ENCODE measurements at regions of chr22 and their contacts with region 1.

Region 1: DNA sequence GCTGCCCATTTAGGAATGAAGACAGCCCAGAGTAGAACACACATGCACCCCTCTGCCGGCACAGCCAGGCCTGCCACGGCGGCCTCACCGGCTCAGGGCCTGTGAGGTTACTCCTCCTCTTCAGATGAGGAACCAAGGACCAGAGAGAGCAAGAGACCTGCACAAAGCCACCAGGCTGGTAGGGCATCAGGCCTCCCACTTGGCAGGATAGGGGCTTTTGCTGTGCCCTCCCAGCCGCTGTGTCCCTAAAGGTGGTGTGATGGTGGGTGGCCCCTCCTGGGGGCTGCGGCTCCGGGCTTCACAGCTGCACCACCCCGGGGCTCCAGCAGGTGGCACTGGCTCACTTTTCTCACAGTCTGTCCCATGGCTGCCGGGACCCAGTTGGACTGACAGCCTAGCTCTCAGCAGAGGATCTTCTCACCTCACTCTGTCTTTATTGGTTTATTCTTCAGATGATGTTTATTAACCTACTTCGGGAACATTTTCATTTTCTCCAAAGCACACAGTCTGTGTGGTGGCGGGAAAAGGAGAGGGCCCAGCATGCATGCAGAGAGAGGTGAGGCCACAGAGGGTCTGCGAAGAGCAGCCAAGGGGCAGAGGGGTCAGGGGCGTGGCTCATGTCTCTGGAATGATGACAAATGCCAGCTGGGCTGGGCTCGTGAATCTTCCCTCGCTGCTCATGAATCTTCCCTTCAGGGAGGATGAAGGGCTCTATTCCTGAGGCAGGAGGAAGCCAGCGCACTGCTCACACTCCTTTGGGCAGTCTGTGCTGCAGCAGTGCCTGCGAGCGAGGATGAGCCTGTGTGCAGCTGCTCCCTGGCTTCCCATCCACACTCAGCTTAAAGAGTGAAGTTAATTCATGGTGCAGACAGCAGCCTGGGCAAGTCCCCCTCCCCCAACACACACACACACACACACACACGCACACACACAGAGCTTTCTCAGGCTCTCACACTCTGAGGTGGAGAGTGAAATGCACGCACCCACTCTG is 101.1 kb upstream of the PITPNB start:
- H3K4me3 ChIP-seq: no peak overlapping the region
- H3K27ac ChIP-seq: no peak overlapping the region
- H3K4me1 ChIP-seq: no peaks in the 10 kb centered on the region; the same call in 1 of the 2 replicates
- CTCF ChIP-seq: peak; percentile 86

Region 2: DNA sequence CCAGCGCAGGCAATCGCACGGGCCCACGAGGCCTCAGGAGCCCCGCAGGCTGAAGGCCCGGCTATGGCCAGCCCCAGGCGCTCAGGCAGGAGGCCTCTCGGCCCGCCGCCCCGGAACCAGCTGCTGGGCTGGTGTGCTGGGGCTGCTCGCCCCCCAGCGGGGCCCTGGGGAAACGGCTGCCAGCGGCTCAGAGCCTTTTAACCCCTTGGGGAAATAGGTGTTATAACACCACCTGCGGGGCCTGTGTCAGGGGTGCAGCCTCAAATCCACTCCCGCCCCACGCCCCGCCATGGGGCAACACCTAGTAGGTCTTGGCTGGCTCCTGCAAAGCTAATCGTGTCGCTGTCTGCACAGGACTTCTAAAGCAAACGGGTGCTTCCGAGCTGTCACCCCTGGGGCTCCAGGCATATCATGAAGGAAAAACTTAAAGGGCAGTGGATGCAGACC is 422.1 kb after region 1 on chr22:
- CTCF ChIA-PET with region 1: interaction called, 10 read pairs
- POLR2A ChIA-PET with region 1: no interaction called
- H3K4me3 ChIP-seq: peak overlapping the region; percentile 29
- H3K27ac ChIP-seq: peak overlapping the region; percentile 73
- H3K4me1 ChIP-seq: peaks cover 38% of the 10 kb centered on the region
- CTCF ChIP-seq: peak; percentile 89

Region 3: GRCh38 chr22:28594797-28595462 is 574.8 kb after region 1 on chr22:
- CTCF ChIA-PET with region 1: interaction called, 70 read pairs
- POLR2A ChIA-PET with region 1: no interaction called
- H3K4me3 ChIP-seq: no peak overlapping the region
- H3K27ac ChIP-seq: no peak overlapping the region
- H3K4me1 ChIP-seq: peaks cover 5% of the 10 kb centered on the region
- CTCF ChIP-seq: peak; percentile 56; the same call in 1 of the 2 replicates

Region 4: DNA sequence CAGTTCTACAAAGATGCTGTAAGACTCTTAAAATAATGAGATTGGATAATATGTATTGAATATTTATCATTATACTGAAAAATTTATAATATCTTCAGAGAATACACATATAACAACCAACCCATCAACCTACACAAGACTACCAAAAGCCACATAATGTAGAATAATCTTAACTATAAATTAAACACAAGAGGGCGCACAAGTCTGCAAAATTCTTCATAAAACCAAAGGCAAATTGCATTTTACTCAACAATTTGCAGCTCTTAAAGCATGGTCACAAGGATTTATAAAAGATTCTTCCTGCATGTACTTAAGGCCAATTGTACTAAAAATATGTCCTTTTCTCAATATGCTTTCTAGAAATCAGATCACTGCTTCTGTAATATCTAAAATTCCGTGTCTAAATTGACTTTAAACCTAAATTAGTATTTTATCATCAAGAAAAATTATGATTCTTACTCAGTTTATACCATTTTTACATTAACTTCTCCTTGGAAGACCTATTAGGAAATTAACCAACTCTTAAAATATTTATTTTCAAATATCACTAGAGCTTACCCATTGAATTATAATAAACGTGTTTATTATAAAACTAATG is 580.5 kb after region 1 on chr22:
- CTCF ChIA-PET with region 1: interaction called, 70 read pairs
- POLR2A ChIA-PET with region 1: no interaction called
- H3K4me3 ChIP-seq: no peak overlapping the region
- H3K27ac ChIP-seq: no peak overlapping the region
- H3K4me1 ChIP-seq: no peaks in the 10 kb centered on the region
- CTCF ChIP-seq: no peak

Measured in HEK293 (cell line).